ENCODE measurements at regions of chr2 and their contacts with region 1.

Region 1: GRCh38 chr2:112626604-112627059 is 19.1 kb upstream of the SLC20A1 start:
- DNase-seq: no peak
- H3K4me3 ChIP-seq: peak overlapping the region; percentile 9
- CTCF ChIP-seq: peak; percentile 91

Region 2: DNA sequence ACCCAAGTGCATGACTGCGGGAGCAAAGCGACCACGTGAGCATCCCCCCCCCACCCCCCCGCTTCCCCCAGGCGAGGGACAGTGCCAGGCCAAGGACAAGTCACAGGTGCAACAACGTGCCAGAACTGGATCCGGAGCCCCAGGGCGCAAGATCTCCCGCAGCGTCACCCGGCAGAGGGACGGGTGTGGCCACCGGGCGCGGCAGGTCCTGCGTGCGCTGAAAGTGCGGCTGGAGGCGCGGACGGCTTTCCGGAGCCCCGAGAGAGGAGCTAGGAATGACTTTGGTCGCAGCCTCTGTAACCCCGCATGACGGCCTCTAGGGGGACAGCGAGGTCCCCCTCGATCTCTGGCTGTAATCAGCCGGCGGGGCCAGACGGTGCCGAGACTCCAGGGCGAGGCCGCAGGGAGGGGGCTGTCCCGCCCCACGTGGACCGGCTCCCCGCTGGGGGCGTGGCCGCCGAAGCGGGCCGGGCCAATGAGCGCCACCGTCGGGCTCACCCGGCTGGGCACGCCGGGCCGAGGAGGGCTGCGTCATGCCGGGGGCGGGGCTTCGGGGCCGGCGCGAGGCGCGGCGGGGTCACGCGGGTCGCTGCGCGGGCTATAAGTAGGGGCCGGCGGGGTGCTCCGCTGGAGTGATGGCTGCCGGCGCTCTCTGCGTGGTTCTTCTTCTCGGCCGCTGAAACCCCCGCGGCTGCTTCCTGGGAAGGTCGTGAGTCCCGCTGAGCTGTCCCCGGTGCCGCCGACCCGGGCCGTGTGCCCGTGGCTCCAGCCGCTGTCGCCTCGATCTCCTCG is 18.9 kb after region 1 on chr2 and contains the start of gene SLC20A1:
- CTCF ChIA-PET with region 1: interaction called, 133 read pairs
- POLR2A ChIA-PET with region 1: interaction called, 102 read pairs
- DNase-seq: no peak
- H3K4me3 ChIP-seq: peak within 1 kb of the TSS; percentile 88
- CTCF ChIP-seq: peak; percentile 40

Region 3: DNA sequence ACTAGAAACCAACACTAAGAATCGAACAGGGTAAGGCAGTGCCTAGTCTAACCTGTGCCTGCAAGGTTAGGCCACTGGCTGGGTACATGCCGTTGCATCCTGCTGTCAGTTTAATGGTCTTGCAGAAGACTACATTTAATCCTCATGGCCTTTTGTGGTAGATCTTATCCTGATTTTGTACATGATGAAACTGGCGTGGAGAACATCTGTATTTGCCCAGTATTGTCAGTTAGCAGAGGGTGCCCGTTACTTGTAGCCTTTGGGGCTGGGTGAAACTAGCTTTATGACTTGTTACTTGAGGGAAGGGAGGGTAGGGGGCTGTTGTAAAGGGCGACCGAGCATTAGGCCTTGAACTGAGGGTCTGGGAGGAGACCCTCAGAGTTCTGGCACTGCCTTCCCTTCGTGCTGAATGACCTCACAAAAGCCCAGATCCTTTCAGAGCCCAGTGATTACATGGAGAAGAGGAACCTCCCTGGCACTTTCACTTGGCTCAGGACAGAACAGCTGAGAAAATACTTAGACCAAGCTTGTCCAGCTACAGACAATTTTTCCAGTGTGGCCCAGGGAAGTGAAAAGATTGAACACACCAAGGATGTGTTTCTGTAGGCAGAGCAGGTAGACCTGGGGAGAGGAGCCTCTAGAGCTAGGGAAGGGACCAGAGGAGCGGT is 38.6 kb after region 1 on chr2:
- CTCF ChIA-PET with region 1: interaction called, 17 read pairs
- POLR2A ChIA-PET with region 1: no interaction called
- DNase-seq: no peak
- H3K4me3 ChIP-seq: no peak overlapping the region
- CTCF ChIP-seq: no peak

Region 4: GRCh38 chr2:112685271-112685884 is 58.7 kb after region 1 on chr2:
- CTCF ChIA-PET with region 1: interaction called, 10 read pairs
- POLR2A ChIA-PET with region 1: no interaction called
- DNase-seq: no peak
- H3K4me3 ChIP-seq: no peak overlapping the region
- CTCF ChIP-seq: no peak

Region 5: GRCh38 chr2:112834396-112835037 is 207.9 kb after region 1 on chr2:
- CTCF ChIA-PET with region 1: no interaction called
- POLR2A ChIA-PET with region 1: no interaction called
- DNase-seq: no peak
- H3K4me3 ChIP-seq: no peak overlapping the region
- CTCF ChIP-seq: no peak

Region 6: DNA sequence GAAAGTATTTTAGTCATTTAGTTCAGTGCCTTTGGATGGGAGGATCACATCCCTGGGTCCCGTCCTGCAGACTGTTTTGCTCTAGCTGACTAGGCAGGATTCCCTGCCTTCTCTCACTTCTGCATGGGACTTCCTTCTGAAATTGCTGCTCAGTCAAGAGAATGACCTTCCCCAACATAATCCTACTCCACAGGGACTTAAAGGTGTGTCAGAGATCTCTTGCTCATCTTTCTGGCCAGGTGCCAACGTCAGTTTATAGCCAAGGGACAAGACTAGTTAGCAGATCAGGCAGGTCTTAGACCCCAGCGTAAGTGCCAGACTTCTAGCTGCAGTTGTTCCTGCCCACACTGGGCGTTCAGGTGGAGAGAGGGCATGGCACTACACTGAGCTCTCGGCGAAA is 219.4 kb after region 1 on chr2:
- CTCF ChIA-PET with region 1: no interaction called
- POLR2A ChIA-PET with region 1: no interaction called
- DNase-seq: no peak
- H3K4me3 ChIP-seq: no peak overlapping the region
- CTCF ChIP-seq: no peak